Heart left ventricle (tissue), 16 donors: ENCODE measurements at regions of chr17 and their contacts with region 1.

Region 1: GRCh38 chr17:70144260-70144846 is 25.0 kb upstream of the KCNJ2 start:
- DNase-seq: no peak
- ATAC-seq: no peak
- H3K4me3 ChIP-seq: no peak overlapping the region
- H3K27ac ChIP-seq: no peak overlapping the region
- H3K4me1 ChIP-seq: peaks cover 0 to 5% (median 0%) of the 10 kb centered on the region in 12 donors
- H3K27me3 ChIP-seq: no peaks in the 10 kb centered on the region
- CTCF ChIP-seq: peak; percentile 61 to 85 (median 74)
- POLR2A ChIP-seq: no peak

Region 2: GRCh38 chr17:69567130-69567529 is 577.2 kb before region 1 on chr17:
- intact Hi-C with region 1: loop called (anchors 1 to 10 kb)
- DNase-seq: no peak
- ATAC-seq: no peak
- H3K4me3 ChIP-seq: no peak overlapping the region
- H3K27ac ChIP-seq: no peak overlapping the region
- H3K4me1 ChIP-seq: peaks cover 0 to 3% (median 0%) of the 10 kb centered on the region in 12 donors
- H3K27me3 ChIP-seq: no peaks in the 10 kb centered on the region
- CTCF ChIP-seq: no peak
- POLR2A ChIP-seq: no peak

Region 3: GRCh38 chr17:69575346-69575761 is 569.0 kb before region 1 on chr17:
- intact Hi-C with region 1: loop called in 3 of 10 experiments (anchors 5 to 10 kb)
- DNase-seq: no peak
- ATAC-seq: peak in 2 of 4 donors; percentile 55 to 63
- H3K4me3 ChIP-seq: no peak overlapping the region
- H3K27ac ChIP-seq: peak overlapping the region in 10 of 12 donors; percentile 3 to 58 (median 27)
- H3K4me1 ChIP-seq: peaks cover 3 to 31% (median 19%) of the 10 kb centered on the region in 12 donors
- H3K27me3 ChIP-seq: no peaks in the 10 kb centered on the region
- CTCF ChIP-seq: no peak
- POLR2A ChIP-seq: no peak

Region 4: GRCh38 chr17:69723742-69724141 is 420.6 kb before region 1 on chr17:
- intact Hi-C with region 1: loop called in 2 of 10 experiments (anchors 5 to 10 kb)
- DNase-seq: no peak
- ATAC-seq: no peak
- H3K4me3 ChIP-seq: no peak overlapping the region
- H3K27ac ChIP-seq: no peak overlapping the region
- H3K4me1 ChIP-seq: peaks cover 0 to 7% (median 5%) of the 10 kb centered on the region in 12 donors
- H3K27me3 ChIP-seq: no peaks in the 10 kb centered on the region
- CTCF ChIP-seq: peak in 2 of 12 donors; percentile 11 to 24
- POLR2A ChIP-seq: no peak

Region 5: DNA sequence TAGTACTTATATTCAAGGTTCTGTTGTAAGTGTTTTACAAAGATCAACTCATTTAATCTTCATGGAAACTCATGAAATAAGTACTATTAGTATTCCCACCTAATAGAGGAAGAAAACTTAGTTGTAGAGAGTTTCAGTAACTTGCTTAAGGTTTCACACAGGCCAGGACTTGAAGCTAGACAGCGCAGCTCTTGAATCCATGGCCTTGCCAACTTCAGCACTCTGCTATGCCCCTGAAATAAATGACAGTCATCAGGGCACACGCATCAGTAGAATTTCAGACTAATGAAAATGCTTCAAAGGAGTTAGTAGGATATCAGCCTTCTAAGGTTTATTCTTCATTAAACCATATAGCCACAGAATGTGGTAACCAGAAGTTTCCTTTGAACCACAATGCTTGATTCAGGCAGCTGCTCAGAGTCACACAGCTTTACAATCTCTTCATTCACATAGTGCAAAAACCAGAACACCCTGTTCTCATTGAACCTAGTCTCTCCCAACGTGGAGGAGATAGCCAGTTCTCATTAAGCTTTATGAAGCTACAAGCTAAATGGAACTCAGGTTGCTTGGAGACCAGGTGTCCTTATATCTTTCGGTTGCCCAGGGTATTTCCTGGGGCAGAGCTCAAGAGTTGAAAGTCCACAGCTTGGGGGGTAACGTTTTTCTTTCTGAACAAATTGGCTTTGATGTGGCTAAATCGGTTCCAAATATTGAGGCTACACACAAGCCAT is 64.6 kb after region 1 on chr17:
- intact Hi-C with region 1: loop called in 1 of 10 experiments (anchors 10 kb)
- DNase-seq: no peak
- ATAC-seq: peak in 3 of 4 donors; percentile 46 to 74 (median 63)
- H3K4me3 ChIP-seq: no peak overlapping the region
- H3K27ac ChIP-seq: no peak overlapping the region
- H3K4me1 ChIP-seq: peaks cover 0 to 27% (median 5%) of the 10 kb centered on the region in 12 donors
- H3K27me3 ChIP-seq: no peaks in the 10 kb centered on the region
- CTCF ChIP-seq: no peak
- POLR2A ChIP-seq: no peak